ENCODE measurements at regions of chr1 and their contacts with region 1.

Region 1: GRCh38 chr1:15304701-15305467 is 57.9 kb downstream of the FHAD1 start:
- DNase-seq: peak; percentile 55 to 66
- ATAC-seq: peak in 5 of 8 donors; percentile 39 to 57 (median 52)
- H3K4me3 ChIP-seq: no peak overlapping the region
- H3K27ac ChIP-seq: no peak overlapping the region
- H3K4me1 ChIP-seq: no peaks in the 10 kb centered on the region
- H3K27me3 ChIP-seq: peaks cover 0 to 4% (median 0%) of the 10 kb centered on the region in 7 donors
- CTCF ChIP-seq: peak; percentile 71 to 91 (median 87)

Region 2: GRCh38 chr1:15128520-15129313 is 176.2 kb before region 1 on chr1:
- intact Hi-C with region 1: loop called (anchors 1 to 5 kb)
- DNase-seq: peak; percentile 59 to 67
- ATAC-seq: peak; percentile 83 to 94 (median 90)
- H3K4me3 ChIP-seq: no peak overlapping the region
- H3K27ac ChIP-seq: no peak overlapping the region
- H3K4me1 ChIP-seq: no peaks in the 10 kb centered on the region
- H3K27me3 ChIP-seq: peaks cover 0 to 4% (median 0%) of the 10 kb centered on the region in 7 donors
- CTCF ChIP-seq: peak; percentile 82 to 91 (median 87)

Region 3: GRCh38 chr1:15152318-15153183 is 152.3 kb before region 1 on chr1:
- intact Hi-C with region 1: loop called in 1 of 10 experiments (anchors 10 kb)
- DNase-seq: peak; percentile 76 to 83
- ATAC-seq: peak; percentile 56 to 84 (median 76)
- H3K4me3 ChIP-seq: peak overlapping the region; percentile 61 to 91 (median 66)
- H3K27ac ChIP-seq: peak overlapping the region; percentile 50 to 88 (median 80)
- H3K4me1 ChIP-seq: peaks cover 2 to 50% (median 20%) of the 10 kb centered on the region in 9 donors
- H3K27me3 ChIP-seq: peaks cover 0 to 35% (median 0%) of the 10 kb centered on the region in 7 donors
- CTCF ChIP-seq: peak; percentile 46 to 84 (median 66)

Measured in heart right ventricle (tissue), 16 donors.